ENCODE measurements at regions of chr3 and their contacts with region 1.

Region 1: DNA sequence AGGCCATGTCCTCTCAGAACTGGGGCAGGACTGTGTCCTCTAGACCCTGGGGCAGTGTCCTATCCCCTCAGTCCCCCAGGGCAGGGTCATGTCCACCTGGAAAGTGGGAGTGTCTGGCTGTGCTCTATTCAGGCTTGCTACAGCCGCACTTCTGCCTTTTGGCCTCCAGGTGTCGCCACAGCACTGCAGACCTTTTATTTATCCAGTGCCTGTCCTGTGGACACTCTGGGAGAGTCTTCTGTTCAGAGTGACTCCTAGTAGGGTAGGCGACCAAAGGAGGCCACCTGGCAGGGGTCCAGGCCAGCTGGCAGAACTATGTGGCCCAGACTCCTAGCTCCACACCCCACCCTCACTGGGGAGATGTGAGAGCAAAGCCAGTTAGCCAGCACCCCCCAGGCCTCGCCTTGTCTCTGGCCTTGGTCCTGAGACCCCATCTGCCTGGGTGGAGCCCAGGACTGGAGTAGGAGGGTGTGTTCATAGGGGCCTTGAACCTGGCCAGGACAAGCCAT is 3.9 kb downstream of the TMIE start:
- DNase-seq: no peak
- H3K4me3 ChIP-seq: no peak overlapping the region
- CTCF ChIP-seq: peak; percentile 93

Region 2: DNA sequence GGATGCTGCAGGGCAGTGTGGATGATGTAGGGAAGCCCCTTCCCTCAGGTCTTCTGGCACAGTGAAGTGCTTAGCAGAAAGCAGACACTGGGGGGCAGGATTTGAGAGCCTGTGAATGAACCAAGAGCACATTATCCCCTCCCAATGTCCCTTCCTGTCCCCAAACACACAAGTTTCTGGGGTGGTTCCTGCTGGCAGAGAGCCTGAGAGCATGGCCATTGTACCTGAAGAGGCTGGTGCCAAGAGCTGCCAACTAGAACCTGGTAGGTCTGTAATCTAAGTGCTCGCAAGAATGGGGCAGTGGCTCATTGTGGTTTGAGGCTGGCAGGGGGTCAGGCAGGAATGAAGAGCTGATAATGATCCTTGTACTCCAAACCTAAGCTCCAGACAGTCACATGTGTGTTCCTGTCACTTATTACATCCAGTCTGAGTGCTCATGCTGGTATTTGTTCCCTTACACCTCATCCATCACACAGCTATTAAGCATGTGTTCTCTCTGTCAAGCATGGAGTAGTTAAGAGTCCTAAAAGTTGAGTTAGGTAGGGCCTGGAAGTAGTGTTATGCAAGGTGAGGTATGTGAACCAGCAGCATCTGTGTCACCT is 490.2 kb before region 1 on chr3:
- CTCF ChIA-PET with region 1: no interaction called
- POLR2A ChIA-PET with region 1: no interaction called
- DNase-seq: no peak
- H3K4me3 ChIP-seq: no peak overlapping the region
- CTCF ChIP-seq: no peak

Region 3: GRCh38 chr3:46717447-46718231 is 12.6 kb after region 1 on chr3 and contains the start of gene PRSS50:
- CTCF ChIA-PET with region 1: interaction called, 29 read pairs
- POLR2A ChIA-PET with region 1: no interaction called
- DNase-seq: no peak
- H3K4me3 ChIP-seq: no peak within 1 kb of the TSS
- CTCF ChIP-seq: peak; percentile 22

Region 4: GRCh38 chr3:46824211-46824970 is 119.3 kb after region 1 on chr3:
- CTCF ChIA-PET with region 1: no interaction called
- POLR2A ChIA-PET with region 1: no interaction called
- DNase-seq: no peak
- H3K4me3 ChIP-seq: no peak overlapping the region
- CTCF ChIP-seq: no peak

Region 5: DNA sequence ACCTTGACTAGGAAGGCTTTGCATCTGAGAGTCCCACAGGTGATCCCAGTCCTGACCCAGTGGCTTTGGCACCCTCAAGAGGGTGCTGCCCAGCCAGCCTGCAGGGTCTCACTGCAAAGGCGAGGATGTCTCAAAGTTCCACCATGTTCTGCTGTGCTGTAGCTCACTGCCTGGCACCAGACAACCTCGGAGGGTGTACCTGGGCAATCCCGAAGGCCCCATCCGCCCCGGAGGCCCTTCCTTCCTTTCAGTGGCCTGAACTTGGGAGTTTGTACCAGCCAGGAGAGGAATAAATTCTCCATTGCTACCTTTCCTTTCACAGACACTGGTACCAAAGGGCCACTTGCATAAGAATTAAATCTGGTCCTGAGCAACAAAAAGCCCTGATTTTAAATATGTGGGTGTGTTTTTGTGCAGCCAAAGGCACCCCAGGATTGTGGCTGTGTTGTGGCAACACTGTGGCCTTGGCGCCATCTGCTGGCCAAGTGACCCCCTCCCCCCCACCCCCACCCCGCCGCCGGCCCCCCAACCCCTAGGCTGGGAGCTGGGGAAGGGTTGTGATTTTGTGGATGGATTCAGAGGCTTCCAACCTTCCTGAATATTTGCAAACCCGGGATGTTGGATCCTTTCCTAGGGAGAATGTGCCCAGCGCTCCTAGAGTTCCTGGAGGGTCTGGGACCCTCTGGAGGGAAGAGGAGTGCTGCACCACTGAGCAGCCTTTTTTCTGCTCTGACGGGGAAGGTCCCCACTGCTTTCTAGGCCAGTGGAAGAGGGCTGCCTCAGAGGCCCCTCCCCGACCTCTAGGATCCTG is 666.0 kb after region 1 on chr3:
- CTCF ChIA-PET with region 1: interaction called, 17 read pairs
- POLR2A ChIA-PET with region 1: no interaction called
- DNase-seq: no peak
- H3K4me3 ChIP-seq: no peak overlapping the region
- CTCF ChIP-seq: no peak